ENCODE measurements at regions of chr6 and their contacts with region 1.

Region 1: GRCh38 chr6:119147101-119148053 is 68.9 kb upstream of the FAM184A start:
- DNase-seq: peak; percentile 28
- H3K4me3 Mint-ChIP-seq: no peak overlapping the region
- H3K27ac Mint-ChIP-seq: peak overlapping the region; percentile 79
- H3K4me1 Mint-ChIP-seq: peaks cover 55% of the 10 kb centered on the region
- H3K27me3 Mint-ChIP-seq: no peaks in the 10 kb centered on the region

Region 2: GRCh38 chr6:119078376-119079282 is 68.7 kb before region 1 on chr6 and contains the start of gene FAM184A:
- intact Hi-C with region 1: loop called (anchors 1 kb)
- DNase-seq: peak; percentile 67
- H3K4me3 Mint-ChIP-seq: peak within 1 kb of the TSS; percentile 89
- H3K27ac Mint-ChIP-seq: peak within 1 kb of the TSS; percentile 69
- H3K4me1 Mint-ChIP-seq: peaks cover 28% of the 10 kb centered on the region
- H3K27me3 Mint-ChIP-seq: peaks cover 8% of the 10 kb centered on the region
- total RNA-seq, gene FAM184A: 2.6 and 2.9 TPM in 2 replicates

Region 3: DNA sequence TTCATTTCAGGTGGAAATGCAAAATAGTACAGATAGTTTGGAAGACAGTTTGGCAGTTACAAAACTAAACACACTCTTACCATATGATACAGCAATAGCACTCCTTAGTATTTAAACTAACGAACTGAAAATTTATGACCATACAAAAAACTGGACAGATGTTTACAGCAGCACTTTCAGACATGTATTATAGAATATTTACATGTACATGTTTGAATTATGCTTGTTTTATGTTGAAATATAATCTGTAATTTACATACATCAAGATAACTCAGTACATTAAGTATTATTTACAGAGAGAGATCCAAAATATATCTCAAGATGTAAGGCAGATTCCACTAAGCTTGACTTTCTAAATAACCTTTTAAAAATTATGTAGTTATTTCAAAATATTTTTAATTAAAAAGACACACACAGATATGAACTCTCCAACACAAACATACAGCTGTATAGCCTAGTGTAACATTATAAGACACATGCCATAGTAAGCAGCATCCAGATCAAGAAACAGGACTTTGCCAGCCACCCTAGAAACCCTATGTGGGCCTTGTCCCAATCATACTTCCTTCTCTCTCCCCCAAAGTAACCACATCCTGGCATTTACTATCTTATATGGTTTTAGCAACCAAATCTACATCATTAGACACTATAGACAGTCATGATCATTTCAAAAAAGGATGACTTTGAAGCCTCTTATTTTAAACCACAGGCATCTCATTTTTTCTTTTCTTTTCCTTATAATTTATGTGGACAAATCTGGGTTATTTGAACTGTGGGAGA is 119.9 kb after region 1 on chr6:
- intact Hi-C with region 1: loop called (anchors 2 kb)
- DNase-seq: no peak
- H3K4me3 Mint-ChIP-seq: no peak overlapping the region
- H3K27ac Mint-ChIP-seq: peak overlapping the region; percentile 57
- H3K4me1 Mint-ChIP-seq: peaks cover 27% of the 10 kb centered on the region
- H3K27me3 Mint-ChIP-seq: no peaks in the 10 kb centered on the region

Region 4: DNA sequence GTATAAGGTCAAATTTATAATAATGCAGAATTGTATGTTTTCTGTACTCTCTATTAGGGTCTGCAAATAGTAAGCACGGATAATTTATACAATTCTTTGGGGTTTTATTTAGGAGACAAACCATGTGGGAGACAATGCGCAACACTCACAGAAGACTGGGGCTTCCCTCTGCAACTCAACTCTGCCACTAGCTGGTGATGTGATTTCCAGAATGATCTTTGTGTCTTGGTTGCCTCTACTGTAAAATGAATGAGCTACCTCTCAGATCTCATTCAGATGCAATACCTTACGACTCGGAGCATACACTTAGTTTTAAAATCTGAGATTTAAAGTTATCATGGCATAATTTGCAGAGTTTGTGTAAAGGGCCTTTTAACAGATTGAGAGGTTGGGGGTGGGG is 195.8 kb after region 1 on chr6:
- intact Hi-C with region 1: loop called (anchors 2 kb)
- DNase-seq: no peak
- H3K4me3 Mint-ChIP-seq: no peak overlapping the region
- H3K27ac Mint-ChIP-seq: no peak overlapping the region
- H3K4me1 Mint-ChIP-seq: peaks cover 82% of the 10 kb centered on the region
- H3K27me3 Mint-ChIP-seq: no peaks in the 10 kb centered on the region

Region 5: GRCh38 chr6:119676961-119677360 is 529.6 kb after region 1 on chr6:
- intact Hi-C with region 1: loop called (anchors 10 kb)
- DNase-seq: no peak
- H3K4me3 Mint-ChIP-seq: no peak overlapping the region
- H3K27ac Mint-ChIP-seq: no peak overlapping the region
- H3K4me1 Mint-ChIP-seq: no peaks in the 10 kb centered on the region
- H3K27me3 Mint-ChIP-seq: peaks cover 19% of the 10 kb centered on the region

Region 6: GRCh38 chr6:119768201-119768600 is 620.8 kb after region 1 on chr6:
- intact Hi-C with region 1: no loop called
- DNase-seq: no peak
- H3K4me3 Mint-ChIP-seq: no peak overlapping the region
- H3K27ac Mint-ChIP-seq: no peak overlapping the region
- H3K4me1 Mint-ChIP-seq: no peaks in the 10 kb centered on the region
- H3K27me3 Mint-ChIP-seq: peaks cover 4% of the 10 kb centered on the region

Region 7: DNA sequence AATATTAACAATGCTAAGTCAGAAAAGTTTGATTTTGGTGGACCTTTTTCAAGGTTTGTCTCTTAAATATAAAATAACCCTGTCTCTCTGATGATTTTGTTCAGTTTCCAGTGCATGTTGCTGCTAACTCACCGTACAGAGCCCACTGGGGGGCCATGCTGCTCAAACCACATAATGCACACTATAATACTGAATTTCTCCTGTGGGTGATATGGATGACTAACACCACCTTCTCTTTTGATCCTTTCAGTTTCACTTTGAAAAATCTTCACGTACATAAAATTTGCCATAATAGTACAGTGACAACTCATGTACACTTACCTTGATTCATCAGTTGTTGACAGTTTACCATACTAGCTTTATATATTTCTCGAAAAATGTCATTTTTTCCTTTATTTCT is 708.8 kb after region 1 on chr6:
- intact Hi-C with region 1: loop called (anchors 5 kb)
- DNase-seq: no peak
- H3K4me3 Mint-ChIP-seq: peak overlapping the region; percentile 27
- H3K27ac Mint-ChIP-seq: no peak overlapping the region
- H3K4me1 Mint-ChIP-seq: peaks cover 11% of the 10 kb centered on the region
- H3K27me3 Mint-ChIP-seq: peaks cover 19% of the 10 kb centered on the region

Measured in activated T-helper 2 cell treated with anti-CD3 and anti-CD28 coated beads, Interferon-gamma antibody, Interleukin-2, Interleukin-4, amounts not matched to agents 10 μg/mL and 5 μg/mL and 100 μg/mL, durations not matched to agents 14 hours and 24 hours and 36 hours (primary cell).